Transverse colon (tissue), 4 donors: ENCODE measurements at regions of chr10 and their contacts with region 1.

Region 1: DNA sequence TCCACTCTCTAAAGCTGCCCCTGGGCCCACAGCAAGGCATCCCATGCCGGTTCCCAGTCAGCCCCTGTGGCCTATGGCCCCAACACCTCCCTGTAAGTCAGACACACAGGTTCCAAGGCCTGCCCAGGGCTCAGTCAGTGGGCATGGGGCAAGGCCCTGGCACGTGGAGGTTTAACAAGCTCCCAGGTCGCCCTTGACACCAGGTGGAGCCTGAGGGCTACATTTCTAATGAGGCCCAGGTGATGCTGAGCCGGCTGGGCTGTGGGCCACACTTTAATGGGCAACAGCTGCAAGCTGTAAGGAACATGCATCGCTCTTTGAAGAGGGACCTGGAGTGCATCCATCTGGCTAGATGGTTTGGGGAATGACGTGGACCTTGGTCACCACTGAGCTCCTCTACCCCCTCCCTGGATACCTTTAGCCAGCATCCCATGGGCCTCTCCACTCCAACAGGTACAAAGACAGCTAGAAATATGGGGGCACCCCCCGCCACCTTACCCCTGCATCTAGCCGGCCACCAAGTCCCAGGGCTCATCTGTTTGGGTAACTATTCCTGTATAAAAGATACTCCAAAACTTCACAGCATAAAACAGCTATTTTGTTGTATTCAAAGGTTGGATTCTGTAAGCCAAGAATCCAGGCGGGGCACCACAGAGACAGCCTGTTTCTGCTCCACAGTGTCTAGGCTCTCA is 122.5 kb downstream of the OAT start:
- DNase-seq: no peak
- H3K4me3 ChIP-seq: no peak overlapping the region
- H3K27ac ChIP-seq: no peak overlapping the region
- H3K4me1 ChIP-seq: no peaks in the 10 kb centered on the region
- H3K27me3 ChIP-seq: no peaks in the 10 kb centered on the region
- CTCF ChIP-seq: no peak
- EP300 ChIP-seq: no peak
- POLR2A ChIP-seq: no peak

Region 2: GRCh38 chr10:123655751-123656150 is 640.5 kb before region 1 on chr10:
- in situ Hi-C with region 1: no loop called
- intact Hi-C with region 1: no loop called
- DNase-seq: no peak
- H3K4me3 ChIP-seq: no peak overlapping the region
- H3K27ac ChIP-seq: no peak overlapping the region
- H3K4me1 ChIP-seq: no peaks in the 10 kb centered on the region
- H3K27me3 ChIP-seq: no peaks in the 10 kb centered on the region
- CTCF ChIP-seq: no peak
- EP300 ChIP-seq: no peak
- POLR2A ChIP-seq: no peak

Region 3: GRCh38 chr10:123835575-123835974 is 460.7 kb before region 1 on chr10:
- in situ Hi-C with region 1: no loop called
- intact Hi-C with region 1: no loop called
- DNase-seq: no peak
- H3K4me3 ChIP-seq: no peak overlapping the region
- H3K27ac ChIP-seq: peak overlapping the region in 3 of 4 donors; percentile 37 to 70 (median 46)
- H3K4me1 ChIP-seq: peaks cover 0 to 10% (median 3%) of the 10 kb centered on the region in 4 donors
- H3K27me3 ChIP-seq: no peaks in the 10 kb centered on the region
- CTCF ChIP-seq: no peak
- EP300 ChIP-seq: no peak
- POLR2A ChIP-seq: no peak

Region 4: GRCh38 chr10:124172181-124172916 is 123.9 kb before region 1 on chr10:
- in situ Hi-C with region 1: no loop called
- intact Hi-C with region 1: loop called (anchors 5 kb)
- DNase-seq: no peak
- H3K4me3 ChIP-seq: no peak overlapping the region
- H3K27ac ChIP-seq: no peak overlapping the region
- H3K4me1 ChIP-seq: no peaks in the 10 kb centered on the region
- H3K27me3 ChIP-seq: no peaks in the 10 kb centered on the region
- CTCF ChIP-seq: no peak
- EP300 ChIP-seq: no peak
- POLR2A ChIP-seq: no peak